Sigmoid colon (tissue), 7 donors: ENCODE measurements at regions of chr9 and their contacts with region 1.

Region 1: GRCh38 chr9:112717661-112718341 is at the start of gene INIP:
- DNase-seq: peak; percentile 97
- H3K4me3 ChIP-seq: peak within 1 kb of the TSS; percentile 60 to 89 (median 73)
- H3K27ac ChIP-seq: peak within 1 kb of the TSS; percentile 87 to 93 (median 88)
- H3K4me1 ChIP-seq: peaks cover 0 to 8% (median 7%) of the 10 kb centered on the region in 4 donors
- H3K27me3 ChIP-seq: no peaks in the 10 kb centered on the region
- CTCF ChIP-seq: no peak
- EP300 ChIP-seq: peak in 1 of 4 donors; percentile 27
- POLR2A ChIP-seq: peak; percentile 45 to 82
- total RNA-seq, gene INIP: 10.0 to 16.8 (median 12.3) TPM

Region 2: GRCh38 chr9:112486221-112487007 is 231.4 kb before region 1 on chr9 and contains the start of gene KIAA1958:
- intact Hi-C with region 1: loop called (anchors 5 kb)
- DNase-seq: peak; percentile 89
- H3K4me3 ChIP-seq: peak within 1 kb of the TSS; percentile 72 to 95 (median 92)
- H3K27ac ChIP-seq: peak within 1 kb of the TSS; percentile 75 to 85 (median 80)
- H3K4me1 ChIP-seq: peaks cover 0 to 13% (median 8%) of the 10 kb centered on the region in 4 donors
- H3K27me3 ChIP-seq: no peaks in the 10 kb centered on the region
- CTCF ChIP-seq: no peak
- EP300 ChIP-seq: no peak
- POLR2A ChIP-seq: peak in 1 of 2 donors; percentile 32
- total RNA-seq, gene KIAA1958: 4.3 to 8.0 (median 5.1) TPM

Region 3: DNA sequence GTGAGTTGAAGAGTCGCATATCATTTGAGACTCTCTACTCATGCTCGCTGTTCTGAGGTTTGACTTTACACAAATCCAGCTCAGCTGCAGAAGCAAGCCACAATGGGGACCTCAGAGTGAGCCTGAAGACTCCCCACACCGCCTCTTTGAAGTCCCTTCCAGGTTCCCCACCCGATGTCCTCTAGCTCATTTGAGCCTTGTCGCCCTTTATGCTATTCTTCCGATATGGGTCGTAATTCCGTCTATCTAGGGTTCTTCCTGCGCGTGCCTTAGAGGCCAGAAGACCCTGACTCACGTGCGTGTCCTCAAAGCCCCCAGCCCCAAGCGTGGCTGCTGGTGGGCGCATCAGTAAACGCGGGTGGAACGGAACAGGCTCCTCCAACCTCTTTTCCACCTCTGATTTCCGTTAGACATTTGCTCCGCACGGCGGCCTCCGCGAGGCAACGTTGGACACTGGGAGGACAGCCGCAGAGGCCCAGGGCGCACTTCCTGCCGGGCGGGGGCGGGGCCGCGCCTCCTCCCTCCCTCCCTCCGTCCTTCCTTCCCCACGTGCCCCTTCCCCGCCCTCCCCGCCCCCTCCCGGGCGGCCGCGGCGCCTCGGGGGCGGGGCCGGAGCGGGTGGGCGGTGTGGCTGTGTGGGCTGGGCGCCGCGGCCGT is 32.4 kb after region 1 on chr9 and contains the start of gene SNX30:
- intact Hi-C with region 1: loop called (anchors 1 kb)
- DNase-seq: peak; percentile 96
- H3K4me3 ChIP-seq: peak within 1 kb of the TSS; percentile 93 to 99 (median 97)
- H3K27ac ChIP-seq: peak within 1 kb of the TSS; percentile 82 to 90 (median 88)
- H3K4me1 ChIP-seq: peaks cover 0 to 48% (median 43%) of the 10 kb centered on the region in 4 donors
- H3K27me3 ChIP-seq: no peaks in the 10 kb centered on the region
- CTCF ChIP-seq: peak in 1 of 4 experiments; percentile 9
- EP300 ChIP-seq: no peak
- POLR2A ChIP-seq: peak; percentile 51 to 67
- total RNA-seq, gene SNX30: 6.4 to 10.0 (median 8.2) TPM

Region 4: DNA sequence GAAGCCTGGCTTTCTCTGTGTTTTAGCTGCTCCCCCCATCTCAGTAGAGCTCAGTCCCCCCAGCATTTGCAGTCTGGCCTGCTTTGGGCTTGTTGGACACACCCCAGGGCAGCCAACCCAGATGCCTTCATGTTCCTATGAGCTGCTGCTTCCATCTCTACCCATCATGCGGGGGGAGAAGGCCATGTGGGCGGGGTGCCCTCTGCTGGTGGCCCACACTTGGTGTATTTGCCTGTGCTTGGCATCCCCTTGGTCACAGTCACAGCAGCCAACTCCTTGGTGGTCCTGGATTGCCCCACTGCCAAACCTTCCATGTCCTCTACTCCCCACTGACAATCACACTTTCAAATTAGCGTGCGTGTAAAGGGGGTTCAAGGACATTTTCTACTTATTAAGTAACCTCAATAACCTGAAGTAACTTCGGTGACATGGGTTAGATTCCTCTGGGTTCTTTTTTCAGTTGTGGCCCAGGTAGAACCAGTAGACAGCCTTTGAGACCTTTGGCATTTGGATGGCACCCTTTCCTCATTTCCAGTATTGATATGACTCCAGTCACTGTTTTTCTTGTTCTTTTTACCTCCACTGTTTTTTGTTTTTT is 75.5 kb after region 1 on chr9:
- intact Hi-C with region 1: loop called (anchors 2 kb)
- DNase-seq: peak; percentile 81
- H3K4me3 ChIP-seq: no peak overlapping the region
- H3K27ac ChIP-seq: no peak overlapping the region
- H3K4me1 ChIP-seq: peaks cover 0 to 54% (median 44%) of the 10 kb centered on the region in 4 donors
- H3K27me3 ChIP-seq: no peaks in the 10 kb centered on the region
- CTCF ChIP-seq: peak; percentile 45 to 76 (median 68)
- EP300 ChIP-seq: no peak
- POLR2A ChIP-seq: no peak

Region 5: GRCh38 chr9:112819635-112820496 is 102.1 kb after region 1 on chr9:
- intact Hi-C with region 1: loop called (anchors 10 kb)
- DNase-seq: no peak
- H3K4me3 ChIP-seq: no peak overlapping the region
- H3K27ac ChIP-seq: peak overlapping the region in 2 of 4 donors; percentile 15 to 22
- H3K4me1 ChIP-seq: peaks cover 0 to 13% (median 9%) of the 10 kb centered on the region in 4 donors
- H3K27me3 ChIP-seq: no peaks in the 10 kb centered on the region
- CTCF ChIP-seq: peak; percentile 17 to 63 (median 46)
- EP300 ChIP-seq: no peak
- POLR2A ChIP-seq: no peak